ENCODE measurements at regions of chr19 and their contacts with region 1.

Region 1: GRCh38 chr19:16376649-16377048 is 52.0 kb downstream of the KLF2 start:
- DNase-seq: peak in 1 of 2 experiments; percentile 86
- H3K4me3 ChIP-seq: no peak overlapping the region
- H3K27ac ChIP-seq: no peak overlapping the region
- H3K4me1 ChIP-seq: no peaks in the 10 kb centered on the region
- H3K27me3 ChIP-seq: no peaks in the 10 kb centered on the region
- CTCF ChIP-seq: peak; percentile 70 to 89 (median 79)
- EP300 ChIP-seq: no peak
- POLR2A ChIP-seq: no peak
- RAD21 ChIP-seq: peak; percentile 41 to 52

Region 2: GRCh38 chr19:16342002-16342715 is 34.5 kb before region 1 on chr19:
- CTCF ChIA-PET with region 1: interaction called, 10 read pairs
- POLR2A ChIA-PET with region 1: no interaction called
- DNase-seq: no peak
- H3K4me3 ChIP-seq: no peak overlapping the region
- H3K27ac ChIP-seq: no peak overlapping the region
- H3K4me1 ChIP-seq: peaks cover 0 to 6% (median 5%) of the 10 kb centered on the region in 4 experiments; a peak in 4 of 7 replicates
- H3K27me3 ChIP-seq: no peaks in the 10 kb centered on the region; a peak in 2 of 7 replicates
- CTCF ChIP-seq: no peak
- EP300 ChIP-seq: no peak
- POLR2A ChIP-seq: no peak
- RAD21 ChIP-seq: no peak

Region 3: GRCh38 chr19:16363133-16363851 is 13.4 kb before region 1 on chr19:
- CTCF ChIA-PET with region 1: interaction called, 37 read pairs
- POLR2A ChIA-PET with region 1: interaction called, 4 read pairs
- DNase-seq: no peak
- H3K4me3 ChIP-seq: no peak overlapping the region
- H3K27ac ChIP-seq: no peak overlapping the region
- H3K4me1 ChIP-seq: peaks cover 0 to 6% (median 1%) of the 10 kb centered on the region in 4 experiments; a peak in 3 of 7 replicates
- H3K27me3 ChIP-seq: no peaks in the 10 kb centered on the region
- CTCF ChIP-seq: no peak
- EP300 ChIP-seq: no peak
- POLR2A ChIP-seq: no peak
- RAD21 ChIP-seq: no peak

Measured in H1 (cell line).